ENCODE measurements at regions of chr19 and their contacts with region 1.

Region 1: GRCh38 chr19:8158411-8159074 is 9.2 kb upstream of the FBN3 start:
- DNase-seq: peak; percentile 58
- H3K4me3 ChIP-seq: no peak overlapping the region
- H3K27ac ChIP-seq: no peak overlapping the region
- H3K27me3 ChIP-seq: peaks cover 3% of the 10 kb centered on the region
- CTCF ChIP-seq: peak; percentile 64

Region 2: GRCh38 chr19:8233370-8233769 is 74.8 kb after region 1 on chr19:
- CTCF ChIA-PET with region 1: no interaction called
- POLR2A ChIA-PET with region 1: no interaction called
- DNase-seq: no peak
- H3K4me3 ChIP-seq: no peak overlapping the region
- H3K27ac ChIP-seq: no peak overlapping the region
- H3K27me3 ChIP-seq: no peaks in the 10 kb centered on the region
- CTCF ChIP-seq: no peak

Region 3: DNA sequence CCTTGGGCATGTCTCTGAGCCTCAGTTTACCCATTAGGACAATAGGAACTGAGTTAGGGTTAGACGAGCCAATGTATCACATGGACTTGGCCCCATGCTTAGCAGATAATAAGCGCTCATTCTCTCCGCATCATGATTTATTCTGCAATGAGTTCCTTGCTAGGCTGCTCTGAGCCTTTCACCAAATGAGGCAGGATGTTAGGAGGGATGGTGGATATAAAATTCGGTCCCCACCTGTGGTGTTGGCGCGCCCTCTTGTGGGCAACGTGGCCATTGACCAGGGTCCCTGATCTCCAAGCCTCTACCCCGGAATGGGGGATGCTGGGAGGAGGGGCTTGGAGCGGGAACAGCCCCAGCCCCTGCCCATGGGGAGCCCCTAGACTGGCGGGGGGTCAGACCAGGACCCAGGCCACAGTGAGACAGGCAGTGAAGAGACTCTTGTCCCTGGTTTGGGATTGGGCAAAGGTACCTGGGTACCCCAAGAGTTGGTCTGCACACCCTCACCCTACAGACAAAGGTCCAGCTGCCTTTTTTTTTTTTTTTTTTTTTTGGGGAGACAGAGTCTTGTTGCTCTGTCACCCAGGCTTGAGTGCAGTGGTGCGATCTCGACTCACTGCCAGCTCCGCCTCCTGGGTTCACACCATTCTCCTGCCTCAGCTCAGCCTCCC is 94.5 kb after region 1 on chr19:
- CTCF ChIA-PET with region 1: interaction called, 12 read pairs
- POLR2A ChIA-PET with region 1: no interaction called
- DNase-seq: peak; percentile 38
- H3K4me3 ChIP-seq: no peak overlapping the region
- H3K27ac ChIP-seq: no peak overlapping the region
- H3K27me3 ChIP-seq: peaks cover 2% of the 10 kb centered on the region
- CTCF ChIP-seq: peak; percentile 99

Measured in AG04450 (cell line).